ENCODE measurements at regions of chr9 and their contacts with region 1.

Region 1: GRCh38 chr9:19988281-19988680 is 199.4 kb upstream of the SLC24A2 start:
- DNase-seq: no peak
- ATAC-seq: no peak
- H3K4me3 ChIP-seq: no peak overlapping the region
- H3K4me3 Mint-ChIP-seq: no peak overlapping the region
- H3K27ac ChIP-seq: no peak overlapping the region
- H3K27ac Mint-ChIP-seq: no peak overlapping the region
- H3K4me1 ChIP-seq: no peaks in the 10 kb centered on the region
- H3K4me1 Mint-ChIP-seq: no peaks in the 10 kb centered on the region
- H3K27me3 ChIP-seq: no peaks in the 10 kb centered on the region
- H3K27me3 Mint-ChIP-seq: no peaks in the 10 kb centered on the region
- CTCF ChIP-seq: no peak

Region 2: DNA sequence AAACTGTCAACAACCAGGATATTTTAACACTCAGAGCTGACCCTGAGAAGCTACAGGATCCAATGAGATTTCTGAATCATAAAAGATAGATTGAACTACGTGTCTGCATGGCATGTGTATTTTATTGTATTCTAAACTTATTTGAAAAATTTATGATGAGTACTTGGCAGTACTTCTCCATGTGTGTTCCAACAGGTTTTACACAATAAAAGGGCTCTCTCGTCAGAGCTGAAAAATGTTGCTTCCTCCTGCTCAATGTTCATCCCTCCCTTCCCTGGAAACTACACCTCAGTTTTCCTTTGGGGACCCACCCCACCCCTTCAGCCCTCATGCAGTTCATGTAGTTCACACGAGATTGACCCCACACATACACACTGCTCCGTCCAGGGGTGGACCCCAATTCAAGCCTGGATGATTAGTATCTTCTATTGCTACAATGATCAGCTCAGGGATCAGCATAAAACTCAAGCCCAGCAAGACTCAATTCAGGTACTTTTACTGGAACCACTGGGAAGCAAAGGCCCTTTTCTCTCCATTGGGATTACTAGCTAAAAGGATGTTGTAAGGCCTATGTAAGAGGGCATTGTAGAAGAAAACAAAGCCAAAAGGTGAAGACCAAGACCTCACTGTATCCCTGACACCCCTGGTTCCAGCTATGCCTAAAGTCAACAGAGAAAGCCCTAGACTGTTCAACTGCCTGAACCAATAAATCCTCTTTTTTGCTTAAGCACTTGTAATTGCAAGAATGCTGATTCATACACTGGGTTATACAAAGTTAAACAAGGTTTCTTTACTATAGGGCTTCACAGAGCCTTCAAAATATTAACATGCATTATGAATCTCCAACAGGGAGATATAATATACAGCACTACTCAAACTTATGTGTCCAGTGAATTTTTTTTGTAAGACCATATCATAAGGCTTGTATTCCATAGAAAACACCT is 1067.9 kb before region 1 on chr9:
- CTCF ChIA-PET with region 1: no interaction called
- POLR2A ChIA-PET with region 1: no interaction called
- intact Hi-C with region 1: loop called in 1 of 2 experiments (anchors 5 kb)
- DNase-seq: no peak
- ATAC-seq: no peak
- H3K4me3 ChIP-seq: no peak overlapping the region
- H3K4me3 Mint-ChIP-seq: no peak overlapping the region
- H3K27ac ChIP-seq: no peak overlapping the region
- H3K27ac Mint-ChIP-seq: no peak overlapping the region
- H3K4me1 ChIP-seq: no peaks in the 10 kb centered on the region
- H3K4me1 Mint-ChIP-seq: no peaks in the 10 kb centered on the region
- H3K27me3 ChIP-seq: no peaks in the 10 kb centered on the region
- H3K27me3 Mint-ChIP-seq: peaks cover 2% of the 10 kb centered on the region
- CTCF ChIP-seq: no peak

Measured in CD8-positive, alpha-beta T cell (primary cell).